Naive thymus-derived CD4-positive, alpha-beta T cell (primary cell): ENCODE measurements at regions of chr10 and their contacts with region 1.

Region 1: DNA sequence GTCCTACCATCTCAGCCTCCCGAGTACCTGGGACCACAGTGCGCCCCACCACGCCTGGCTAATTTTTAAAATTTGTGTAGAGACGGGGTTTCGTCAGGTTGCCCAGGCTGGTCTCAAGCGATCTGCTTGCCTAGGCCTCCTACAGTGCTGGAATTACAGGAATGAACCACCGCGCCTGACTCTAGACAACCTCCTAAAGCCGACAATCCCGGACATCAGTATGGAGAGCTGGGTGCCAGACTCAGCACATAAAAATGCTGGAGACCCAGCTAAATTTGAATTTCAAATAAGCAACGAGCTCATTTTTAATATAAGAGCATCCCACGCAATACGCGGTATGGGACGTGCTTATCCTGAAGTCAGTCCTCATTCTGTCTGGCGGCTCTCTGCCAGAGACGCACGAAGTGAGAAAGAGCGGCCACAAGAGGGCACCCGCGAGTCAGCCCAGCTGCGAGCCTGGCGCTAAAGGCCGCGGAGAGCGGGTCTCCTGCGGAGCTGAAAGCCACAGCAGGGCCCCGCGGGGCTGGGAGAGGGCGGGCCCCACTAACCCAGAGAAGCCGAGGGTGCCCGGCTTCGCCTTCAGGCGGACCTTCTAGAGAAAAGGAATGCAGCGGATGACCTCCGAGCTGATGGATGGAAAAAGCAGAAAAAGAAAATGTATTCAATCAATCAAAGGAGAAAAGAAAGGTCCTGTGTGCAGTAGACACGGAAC is 7.0 kb downstream of the CALY start:
- DNase-seq: peak; percentile 72 to 88 (median 82)
- ATAC-seq: peak; percentile 92
- H3K4me3 ChIP-seq: no peak overlapping the region
- H3K4me3 Mint-ChIP-seq: peak overlapping the region in 8 of 10 donors; percentile 10 to 58 (median 42)
- H3K27ac ChIP-seq: no peak overlapping the region
- H3K27ac Mint-ChIP-seq: no peak overlapping the region
- H3K4me1 ChIP-seq: peaks cover 8 to 18% of the 10 kb centered on the region in 2 donors
- H3K4me1 Mint-ChIP-seq: peaks cover 4 to 18% (median 12%) of the 10 kb centered on the region in 7 donors
- H3K27me3 ChIP-seq: peaks cover 8 to 12% of the 10 kb centered on the region in 2 donors
- H3K27me3 Mint-ChIP-seq: peaks cover 12 to 78% (median 19%) of the 10 kb centered on the region in 5 donors

Region 2: DNA sequence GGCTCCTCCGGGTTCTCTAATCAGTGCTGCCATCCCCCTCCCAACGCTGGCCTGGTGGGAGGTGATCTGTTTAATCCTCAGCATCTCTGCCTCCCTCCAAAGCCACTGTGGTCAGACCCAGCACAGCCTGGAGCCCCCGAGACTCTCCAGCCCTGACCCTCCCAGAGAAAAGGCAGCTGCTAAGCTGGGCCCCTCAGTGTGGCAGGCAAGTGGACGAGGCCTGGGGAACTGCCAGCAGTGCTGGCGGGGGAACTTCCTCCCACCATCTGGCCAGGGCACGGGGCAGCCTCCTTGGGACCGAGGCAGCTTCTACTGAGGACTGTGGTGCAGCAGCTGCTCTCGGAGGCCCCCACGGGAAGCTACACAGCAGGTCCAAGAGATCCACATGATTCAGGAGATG is 1091.8 kb before region 1 on chr10:
- CTCF ChIA-PET with region 1: no interaction called
- POLR2A ChIA-PET with region 1: no interaction called
- intact Hi-C with region 1: no loop called
- DNase-seq: no peak
- ATAC-seq: no peak
- H3K4me3 ChIP-seq: no peak overlapping the region
- H3K4me3 Mint-ChIP-seq: no peak overlapping the region
- H3K27ac ChIP-seq: no peak overlapping the region
- H3K27ac Mint-ChIP-seq: no peak overlapping the region
- H3K4me1 ChIP-seq: no peaks in the 10 kb centered on the region
- H3K4me1 Mint-ChIP-seq: peaks cover 0 to 5% (median 2%) of the 10 kb centered on the region in 7 donors
- H3K27me3 ChIP-seq: no peaks in the 10 kb centered on the region
- H3K27me3 Mint-ChIP-seq: no peaks in the 10 kb centered on the region

Region 3: GRCh38 chr10:132421392-132421877 is 908.2 kb before region 1 on chr10:
- CTCF ChIA-PET with region 1: no interaction called
- POLR2A ChIA-PET with region 1: no interaction called
- intact Hi-C with region 1: no loop called
- DNase-seq: no peak
- ATAC-seq: peak; percentile 75
- H3K4me3 ChIP-seq: no peak overlapping the region
- H3K4me3 Mint-ChIP-seq: peak overlapping the region in 7 of 10 donors; percentile 2 to 63 (median 51)
- H3K27ac ChIP-seq: peak overlapping the region; percentile 50
- H3K27ac Mint-ChIP-seq: peak overlapping the region in 6 of 9 donors; percentile 34 to 93 (median 78)
- H3K4me1 ChIP-seq: peaks cover 0 to 33% of the 10 kb centered on the region in 2 donors
- H3K4me1 Mint-ChIP-seq: peaks cover 5 to 39% (median 28%) of the 10 kb centered on the region in 7 donors
- H3K27me3 ChIP-seq: no peaks in the 10 kb centered on the region
- H3K27me3 Mint-ChIP-seq: peaks cover 0 to 1% (median 0%) of the 10 kb centered on the region in 5 donors

Region 4: GRCh38 chr10:132939957-132940790 is 389.5 kb before region 1 on chr10:
- CTCF ChIA-PET with region 1: no interaction called
- POLR2A ChIA-PET with region 1: no interaction called
- intact Hi-C with region 1: loop called in 1 of 2 experiments (anchors 5 kb)
- DNase-seq: peak in 1 of 9 donors; percentile 43
- ATAC-seq: peak; percentile 49
- H3K4me3 ChIP-seq: no peak overlapping the region
- H3K4me3 Mint-ChIP-seq: peak overlapping the region in 3 of 10 donors; percentile 45 to 53 (median 47)
- H3K27ac ChIP-seq: no peak overlapping the region
- H3K27ac Mint-ChIP-seq: no peak overlapping the region
- H3K4me1 ChIP-seq: no peaks in the 10 kb centered on the region
- H3K4me1 Mint-ChIP-seq: peaks cover 0 to 10% (median 5%) of the 10 kb centered on the region in 7 donors
- H3K27me3 ChIP-seq: no peaks in the 10 kb centered on the region
- H3K27me3 Mint-ChIP-seq: peaks cover 41 to 60% (median 51%) of the 10 kb centered on the region in 5 donors

Region 5: DNA sequence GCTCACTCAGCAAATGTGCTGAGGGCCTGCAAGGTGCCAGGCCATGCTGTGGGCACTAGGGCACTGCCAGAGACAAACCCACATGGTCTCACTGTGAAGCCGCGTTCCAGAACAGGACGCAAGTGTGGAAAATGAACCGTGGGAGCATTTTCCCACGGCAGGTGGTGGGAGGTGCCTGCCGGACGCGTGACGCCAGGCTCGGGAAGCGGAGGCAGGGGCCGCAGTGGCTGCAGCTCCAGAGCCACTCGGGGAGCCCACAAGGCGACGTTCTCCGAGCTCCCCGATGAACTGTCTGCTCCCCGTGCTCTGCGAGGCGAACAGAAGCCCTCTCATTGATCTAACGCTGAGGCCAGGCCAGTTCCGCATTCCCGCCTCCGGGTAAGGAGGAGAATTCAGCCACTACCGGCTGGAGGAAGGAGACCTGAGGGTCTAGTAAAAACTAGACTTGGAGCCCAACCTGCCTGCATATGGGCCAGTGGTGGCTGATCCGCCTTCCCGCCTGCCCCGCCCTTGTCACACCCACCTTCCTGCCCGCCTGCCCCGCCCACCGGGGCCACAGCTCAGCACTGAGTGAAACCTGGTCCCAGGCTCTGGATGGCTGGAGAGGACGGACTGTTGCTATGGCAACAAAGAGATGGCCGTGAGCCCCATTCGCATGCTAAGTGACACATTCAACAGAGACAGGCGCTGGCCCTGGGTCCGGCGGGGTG is 228.8 kb before region 1 on chr10:
- CTCF ChIA-PET with region 1: no interaction called
- POLR2A ChIA-PET with region 1: no interaction called
- intact Hi-C with region 1: no loop called
- DNase-seq: peak in 2 of 9 donors; percentile 5 to 13
- ATAC-seq: no peak
- H3K4me3 ChIP-seq: no peak overlapping the region
- H3K4me3 Mint-ChIP-seq: peak overlapping the region in 5 of 10 donors; percentile 19 to 71 (median 29)
- H3K27ac ChIP-seq: no peak overlapping the region
- H3K27ac Mint-ChIP-seq: no peak overlapping the region
- H3K4me1 ChIP-seq: no peaks in the 10 kb centered on the region
- H3K4me1 Mint-ChIP-seq: peaks cover 0 to 10% (median 4%) of the 10 kb centered on the region in 7 donors
- H3K27me3 ChIP-seq: no peaks in the 10 kb centered on the region
- H3K27me3 Mint-ChIP-seq: peaks cover 3 to 26% (median 6%) of the 10 kb centered on the region in 5 donors

Region 6: GRCh38 chr10:133357285-133358151 is 27.9 kb after region 1 on chr10 and contains the start of gene FUOM:
- CTCF ChIA-PET with region 1: interaction called, 6 read pairs
- POLR2A ChIA-PET with region 1: interaction called, 16 read pairs
- intact Hi-C with region 1: loop called in 1 of 2 experiments (anchors 1 kb)
- DNase-seq: peak; percentile 60 to 88 (median 74)
- ATAC-seq: peak; percentile 95
- H3K4me3 ChIP-seq: peak within 1 kb of the TSS; percentile 61
- H3K4me3 Mint-ChIP-seq: peak within 1 kb of the TSS; percentile 62 to 85 (median 79)
- H3K27ac ChIP-seq: peak within 1 kb of the TSS; percentile 76
- H3K27ac Mint-ChIP-seq: peak within 1 kb of the TSS in 7 of 9 donors; percentile 23 to 72 (median 59)
- H3K4me1 ChIP-seq: no peaks in the 10 kb centered on the region
- H3K4me1 Mint-ChIP-seq: peaks cover 0 to 6% (median 4%) of the 10 kb centered on the region in 7 donors
- H3K27me3 ChIP-seq: no peaks in the 10 kb centered on the region
- H3K27me3 Mint-ChIP-seq: no peaks in the 10 kb centered on the region
- total RNA-seq, gene FUOM: 11.2 to 24.6 (median 16.9) TPM

Region 7: GRCh38 chr10:133394064-133394663 is 64.5 kb after region 1 on chr10 and contains the start of gene MTG1:
- CTCF ChIA-PET with region 1: interaction called, 17 read pairs
- POLR2A ChIA-PET with region 1: interaction called, 11 read pairs
- intact Hi-C with region 1: loop called (anchors 1 to 5 kb)
- DNase-seq: peak; percentile 84 to 99 (median 91)
- ATAC-seq: peak; percentile 94
- H3K4me3 ChIP-seq: peak within 1 kb of the TSS; percentile 72
- H3K4me3 Mint-ChIP-seq: peak within 1 kb of the TSS; percentile 89 to 98 (median 92)
- H3K27ac ChIP-seq: peak within 1 kb of the TSS; percentile 81
- H3K27ac Mint-ChIP-seq: peak within 1 kb of the TSS; percentile 71 to 96 (median 89)
- H3K4me1 ChIP-seq: peaks cover 32 to 33% of the 10 kb centered on the region in 2 donors
- H3K4me1 Mint-ChIP-seq: peaks cover 19 to 49% (median 39%) of the 10 kb centered on the region in 7 donors
- H3K27me3 ChIP-seq: no peaks in the 10 kb centered on the region
- H3K27me3 Mint-ChIP-seq: peaks cover 0 to 2% (median 0%) of the 10 kb centered on the region in 5 donors
- total RNA-seq, gene MTG1: 51.0 to 67.1 (median 57.2) TPM

Region 8: GRCh38 chr10:133520155-133520738 is 190.6 kb after region 1 on chr10:
- CTCF ChIA-PET with region 1: interaction called, 6 read pairs
- POLR2A ChIA-PET with region 1: no interaction called
- intact Hi-C with region 1: loop called (anchors 1 kb)
- DNase-seq: peak; percentile 79 to 94 (median 87)
- ATAC-seq: peak; percentile 100
- H3K4me3 ChIP-seq: peak overlapping the region; percentile 61
- H3K4me3 Mint-ChIP-seq: peak overlapping the region; percentile 39 to 76 (median 64)
- H3K27ac ChIP-seq: peak overlapping the region; percentile 52
- H3K27ac Mint-ChIP-seq: peak overlapping the region in 5 of 9 donors; percentile 26 to 81 (median 48)
- H3K4me1 ChIP-seq: peaks cover 8 to 12% of the 10 kb centered on the region in 2 donors
- H3K4me1 Mint-ChIP-seq: peaks cover 0 to 21% (median 11%) of the 10 kb centered on the region in 7 donors
- H3K27me3 ChIP-seq: no peaks in the 10 kb centered on the region
- H3K27me3 Mint-ChIP-seq: peaks cover 0 to 43% (median 15%) of the 10 kb centered on the region in 5 donors